Cardiac septum (tissue), 1 donor: ENCODE measurements at regions of chr4 and their contacts with region 1.

Region 1: GRCh38 chr4:119041951-119042560 is 93.6 kb upstream of the MYOZ2 start:
- DNase-seq: no peak

Region 2: DNA sequence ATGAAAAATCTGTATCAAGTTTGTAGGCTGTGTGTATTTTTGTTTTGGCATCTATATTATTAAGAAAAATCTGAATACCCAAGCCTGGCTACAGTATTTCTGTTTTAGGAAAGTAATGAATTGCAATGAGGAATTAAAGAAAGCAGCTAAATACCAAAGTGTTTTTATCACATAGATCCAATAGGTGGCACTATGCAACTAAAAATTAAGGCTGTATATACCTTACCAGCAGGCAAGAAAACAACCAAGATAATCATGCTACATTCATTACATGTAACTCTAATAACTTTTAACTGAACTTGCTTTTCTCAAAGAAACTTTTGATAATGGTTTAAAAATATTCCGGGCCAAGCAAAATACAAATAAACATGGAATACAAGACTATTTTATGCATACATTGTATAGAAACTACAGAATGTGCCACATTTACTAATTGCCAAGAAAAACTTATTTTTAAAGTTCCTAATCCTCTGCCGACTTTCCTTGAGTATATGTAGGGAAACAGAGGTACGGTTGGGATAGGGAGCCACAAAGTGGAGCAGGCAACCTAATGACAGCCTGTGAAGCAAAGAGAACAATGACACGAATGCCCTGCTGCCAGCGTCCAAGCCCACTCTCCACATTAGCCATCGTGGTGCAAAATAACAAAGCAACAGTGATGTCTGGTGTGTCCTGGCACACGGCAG is 269.8 kb before region 1 on chr4:
- intact Hi-C with region 1: loop called (anchors 5 kb)
- DNase-seq: no peak

Region 3: GRCh38 chr4:119080716-119081541 is 38.9 kb after region 1 on chr4:
- intact Hi-C with region 1: loop called (anchors 5 kb)
- DNase-seq: no peak

Region 4: DNA sequence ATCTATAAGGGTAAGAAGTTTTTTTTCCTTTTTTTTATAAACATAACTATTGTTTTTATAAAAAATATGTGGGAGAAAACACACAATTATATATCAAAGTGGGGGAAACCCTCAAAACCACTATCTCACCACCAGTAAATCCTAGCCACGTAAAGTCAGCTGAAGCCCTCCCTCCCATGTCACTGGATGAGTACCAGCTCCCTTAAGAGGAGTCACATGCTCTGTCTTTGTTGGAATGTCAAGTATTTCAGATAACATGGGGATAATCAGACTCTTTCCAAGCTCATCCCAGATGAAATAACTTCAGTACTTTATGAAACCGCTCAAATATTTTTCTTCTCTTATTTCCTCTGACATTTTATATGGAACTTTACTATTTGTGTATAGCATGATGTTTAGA is 96.0 kb after region 1 on chr4:
- intact Hi-C with region 1: loop called (anchors 2 kb)
- DNase-seq: no peak

Region 5: DNA sequence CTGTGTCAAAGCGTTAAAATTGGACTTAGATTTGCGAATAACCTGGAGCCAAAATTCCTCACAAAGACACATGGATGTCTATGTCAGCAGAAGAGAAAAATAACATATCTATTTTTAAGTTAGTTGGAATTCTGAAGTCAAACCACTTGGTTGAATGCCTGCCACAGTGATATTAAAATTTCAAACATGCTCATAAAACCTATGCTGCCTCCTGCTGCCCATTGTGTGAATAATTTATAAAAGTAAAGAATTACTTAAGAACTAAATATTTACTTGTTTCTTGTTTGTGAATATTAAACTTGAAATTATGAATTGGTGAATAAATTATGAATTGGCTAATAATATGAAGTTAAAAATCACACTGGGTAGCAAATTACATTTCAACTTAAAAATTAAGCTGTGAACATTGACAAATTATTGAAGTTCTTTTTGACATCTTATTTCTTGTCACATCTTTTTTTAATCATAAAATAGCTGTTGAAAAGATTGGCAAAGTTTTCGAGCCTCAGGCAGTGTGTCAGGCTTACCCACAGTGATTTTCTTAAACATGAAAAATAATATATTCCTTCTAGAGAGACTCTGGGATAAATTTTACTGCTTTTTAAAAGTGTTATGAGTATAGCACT is 244.4 kb after region 1 on chr4:
- intact Hi-C with region 1: loop called (anchors 5 kb)
- DNase-seq: no peak